Activated B cell treated with CpG ODN at 0.5 μM for 24 hours (primary cell): ENCODE measurements at regions of chr4 and their contacts with region 1.

Region 1: DNA sequence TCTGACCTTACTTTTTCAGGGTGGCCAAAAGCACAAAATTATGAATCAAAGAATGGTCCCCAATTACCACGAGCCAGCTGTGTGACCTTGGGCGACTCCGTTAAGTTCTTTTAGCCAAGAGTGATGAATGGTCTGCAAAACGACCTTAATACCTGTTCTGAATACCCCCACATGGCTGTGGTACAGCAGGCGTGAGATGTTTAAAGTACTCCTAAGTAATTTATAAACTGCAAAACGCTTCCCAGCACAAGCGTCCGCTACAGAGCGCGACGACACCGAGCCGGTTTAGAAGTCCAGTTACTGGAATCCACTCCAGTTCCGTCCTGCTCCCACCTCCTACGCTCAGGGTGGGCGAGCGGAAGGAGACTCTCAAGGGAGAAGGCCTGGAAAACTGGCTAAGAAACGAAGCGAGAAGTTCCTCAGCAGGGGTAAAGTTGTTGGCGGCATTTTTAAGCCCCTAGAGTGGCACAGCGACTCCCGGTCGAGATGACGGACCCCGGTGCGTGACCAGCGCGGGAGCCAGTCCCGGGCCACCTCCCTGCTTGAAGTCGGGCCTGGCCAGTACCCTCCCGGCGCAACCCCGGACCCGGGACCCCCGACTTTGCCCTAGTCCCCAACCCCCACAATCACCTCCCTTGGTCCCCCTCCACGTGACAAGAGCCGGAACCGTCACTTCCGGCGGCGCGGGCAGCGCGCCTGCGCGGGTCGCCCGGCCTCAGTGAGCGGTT is 683 bp upstream of the BMP2K start:
- DNase-seq: no peak
- ATAC-seq: peak; percentile 60
- H3K4me3 Mint-ChIP-seq: peak overlapping the region; percentile 97
- H3K27ac Mint-ChIP-seq: peak overlapping the region; percentile 99
- H3K4me1 Mint-ChIP-seq: peaks cover 19% of the 10 kb centered on the region
- H3K27me3 Mint-ChIP-seq: no peaks in the 10 kb centered on the region
- CTCF ChIP-seq: no peak

Region 2: GRCh38 chr4:78197947-78198346 is 577.5 kb before region 1 on chr4:
- CTCF ChIA-PET with region 1: no interaction called
- POLR2A ChIA-PET with region 1: no interaction called
- intact Hi-C with region 1: no loop called
- DNase-seq: no peak
- ATAC-seq: no peak
- H3K4me3 Mint-ChIP-seq: no peak overlapping the region
- H3K27ac Mint-ChIP-seq: no peak overlapping the region
- H3K4me1 Mint-ChIP-seq: no peaks in the 10 kb centered on the region
- H3K27me3 Mint-ChIP-seq: no peaks in the 10 kb centered on the region
- CTCF ChIP-seq: no peak

Region 3: DNA sequence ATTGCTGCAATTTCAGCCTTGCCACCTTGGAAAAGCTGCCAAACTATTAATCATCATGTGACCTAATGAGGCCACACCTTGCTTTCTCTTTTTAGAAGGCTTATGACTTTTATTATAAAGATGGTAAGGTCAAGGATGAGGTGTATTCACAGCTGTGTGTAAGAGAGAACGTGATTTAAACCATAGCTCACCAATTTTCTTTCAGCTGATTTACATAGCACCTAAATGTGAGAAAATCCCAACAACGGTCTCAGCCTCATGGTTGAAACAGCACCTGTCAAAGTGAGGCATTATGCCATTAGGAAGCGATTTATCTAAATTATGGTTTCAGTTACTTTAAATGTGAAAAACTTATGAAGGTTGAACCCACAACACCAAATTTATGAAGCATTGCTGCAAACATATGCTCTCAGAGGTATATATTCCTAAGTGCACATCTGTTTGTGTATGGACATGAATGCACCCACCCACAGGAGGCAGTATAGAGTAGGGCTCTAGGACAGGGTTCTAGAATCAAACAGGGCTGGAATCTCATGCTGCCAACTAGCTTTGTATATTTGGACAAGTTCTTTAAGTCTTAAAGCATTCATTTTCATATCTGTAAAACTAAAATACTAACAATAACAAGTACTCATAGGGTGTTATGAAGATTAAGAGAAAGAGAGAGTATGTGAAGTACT is 183.2 kb before region 1 on chr4:
- CTCF ChIA-PET with region 1: no interaction called
- POLR2A ChIA-PET with region 1: no interaction called
- intact Hi-C with region 1: loop called (anchors 1 kb)
- DNase-seq: no peak
- ATAC-seq: no peak
- H3K4me3 Mint-ChIP-seq: no peak overlapping the region
- H3K27ac Mint-ChIP-seq: no peak overlapping the region
- H3K4me1 Mint-ChIP-seq: peaks cover 22% of the 10 kb centered on the region
- H3K27me3 Mint-ChIP-seq: no peaks in the 10 kb centered on the region
- CTCF ChIP-seq: no peak

Region 4: GRCh38 chr4:78638337-78639172 is 136.9 kb before region 1 on chr4:
- CTCF ChIA-PET with region 1: interaction called, 4 read pairs
- POLR2A ChIA-PET with region 1: interaction called, 41 read pairs
- intact Hi-C with region 1: no loop called
- DNase-seq: no peak
- ATAC-seq: peak; percentile 78
- H3K4me3 Mint-ChIP-seq: peak overlapping the region; percentile 62
- H3K27ac Mint-ChIP-seq: peak overlapping the region; percentile 93
- H3K4me1 Mint-ChIP-seq: peaks cover 71% of the 10 kb centered on the region
- H3K27me3 Mint-ChIP-seq: no peaks in the 10 kb centered on the region
- CTCF ChIP-seq: no peak

Region 5: DNA sequence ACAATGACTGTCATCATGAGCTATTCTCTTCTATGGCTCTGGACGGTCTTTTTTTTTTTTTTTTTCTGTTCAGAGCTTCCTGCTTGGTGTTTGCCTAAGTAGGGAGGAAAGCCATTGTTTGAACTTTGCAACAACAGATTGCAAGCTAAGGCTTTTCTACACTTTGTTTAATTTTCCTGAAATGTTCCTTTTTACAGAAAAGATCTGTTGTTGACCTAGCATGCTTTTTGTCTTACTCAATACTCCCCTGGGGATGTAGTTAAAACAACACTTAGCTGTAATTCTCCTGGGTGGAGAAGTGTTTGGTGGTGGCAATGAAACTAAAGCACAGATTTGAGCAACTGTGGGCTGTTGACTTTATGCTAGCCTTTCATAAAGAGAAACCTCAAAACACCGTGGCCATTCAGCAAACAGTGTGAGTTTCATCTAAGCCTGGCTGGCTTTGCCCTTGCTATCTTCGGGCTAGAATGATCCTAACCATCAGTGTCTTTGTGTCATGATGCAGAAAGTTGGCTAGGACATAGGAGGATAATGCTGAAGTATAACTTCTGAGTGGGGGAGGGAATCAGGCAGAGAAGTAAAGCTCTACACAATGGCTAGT is 113.4 kb before region 1 on chr4:
- CTCF ChIA-PET with region 1: interaction called, 4 read pairs
- POLR2A ChIA-PET with region 1: interaction called, 21 read pairs
- intact Hi-C with region 1: no loop called
- DNase-seq: no peak
- ATAC-seq: peak; percentile 51
- H3K4me3 Mint-ChIP-seq: peak overlapping the region; percentile 57
- H3K27ac Mint-ChIP-seq: peak overlapping the region; percentile 83
- H3K4me1 Mint-ChIP-seq: peaks cover 78% of the 10 kb centered on the region
- H3K27me3 Mint-ChIP-seq: no peaks in the 10 kb centered on the region
- CTCF ChIP-seq: no peak

Region 6: DNA sequence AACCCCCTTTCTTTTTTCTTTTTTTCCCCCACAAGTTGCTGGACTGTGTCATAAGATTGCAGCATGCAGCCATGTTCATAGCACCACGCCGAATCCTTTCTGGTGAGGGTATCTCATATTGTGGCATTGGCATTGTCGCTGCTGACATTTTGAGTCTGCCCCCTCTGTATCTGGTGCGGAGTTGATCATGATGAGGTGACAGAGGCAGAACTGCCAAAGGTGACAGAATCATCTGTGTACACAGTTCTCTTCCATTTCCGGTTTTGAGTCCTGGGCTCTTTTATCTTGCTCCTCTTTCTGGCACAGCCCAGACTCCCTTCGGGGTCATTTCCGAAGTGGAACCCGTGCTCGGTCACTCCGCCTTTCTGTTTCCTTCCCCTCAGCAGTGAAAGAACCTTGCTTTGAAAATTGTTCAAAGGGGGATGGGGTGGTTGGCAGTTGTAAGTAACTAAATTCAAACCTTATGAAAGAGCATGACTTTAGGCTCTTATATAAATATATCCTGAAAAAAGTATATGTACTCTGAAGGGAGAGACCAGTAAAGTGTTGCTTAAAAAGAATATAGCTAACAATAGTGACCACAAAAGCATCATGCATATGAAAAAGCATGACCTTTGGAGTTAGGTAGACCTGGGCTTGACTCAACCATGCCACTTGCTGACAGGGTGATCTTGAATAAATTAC is 54.3 kb before region 1 on chr4:
- CTCF ChIA-PET with region 1: interaction called, 3 read pairs
- POLR2A ChIA-PET with region 1: interaction called, 15 read pairs
- intact Hi-C with region 1: no loop called
- DNase-seq: no peak
- ATAC-seq: peak; percentile 75
- H3K4me3 Mint-ChIP-seq: peak overlapping the region; percentile 78
- H3K27ac Mint-ChIP-seq: peak overlapping the region; percentile 89
- H3K4me1 Mint-ChIP-seq: peaks cover 40% of the 10 kb centered on the region
- H3K27me3 Mint-ChIP-seq: no peaks in the 10 kb centered on the region
- CTCF ChIP-seq: no peak

Region 7: GRCh38 chr4:78809928-78810835 is 34.7 kb after region 1 on chr4:
- CTCF ChIA-PET with region 1: no interaction called
- POLR2A ChIA-PET with region 1: no interaction called
- intact Hi-C with region 1: loop called (anchors 5 kb)
- DNase-seq: no peak
- ATAC-seq: no peak
- H3K4me3 Mint-ChIP-seq: no peak overlapping the region
- H3K27ac Mint-ChIP-seq: peak overlapping the region; percentile 5
- H3K4me1 Mint-ChIP-seq: peaks cover 67% of the 10 kb centered on the region
- H3K27me3 Mint-ChIP-seq: no peaks in the 10 kb centered on the region
- CTCF ChIP-seq: no peak

Region 8: DNA sequence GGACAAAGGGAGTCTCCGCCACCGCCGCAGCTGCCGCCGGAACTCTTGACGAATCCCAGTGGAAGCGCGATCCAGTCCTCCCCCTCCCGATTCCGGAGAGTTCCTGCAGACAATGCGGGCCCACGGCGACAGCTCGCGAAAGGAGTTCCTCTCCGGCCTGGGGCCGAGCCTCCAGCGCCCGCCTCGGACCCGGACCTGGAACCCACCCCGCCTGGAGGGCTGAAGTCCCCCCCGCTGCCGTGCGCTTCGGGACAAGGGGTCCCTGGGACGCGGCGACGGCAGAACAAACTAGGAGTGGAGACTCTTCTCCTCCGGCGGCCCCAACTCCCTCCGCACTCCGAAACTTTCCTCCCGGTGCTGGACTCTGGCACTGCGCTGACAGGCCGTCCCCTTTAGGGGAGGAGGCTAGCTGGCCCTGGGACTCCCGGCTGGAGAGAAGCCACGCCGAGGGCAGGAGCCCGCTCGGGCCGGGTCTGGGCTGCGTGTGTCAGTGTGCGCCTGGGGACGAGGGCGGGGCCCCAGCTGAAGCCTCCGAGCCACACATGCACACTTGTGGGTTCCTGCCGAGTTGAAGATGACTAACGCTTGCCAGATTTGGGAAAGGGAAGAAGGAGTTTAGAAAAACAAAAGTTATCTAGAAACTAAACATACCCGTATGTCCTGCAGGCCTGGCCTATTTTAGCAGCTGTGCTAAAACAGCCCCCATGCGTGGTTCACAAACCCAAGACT is 1297.4 kb after region 1 on chr4 and contains the start of gene ANTXR2:
- CTCF ChIA-PET with region 1: no interaction called
- POLR2A ChIA-PET with region 1: no interaction called
- intact Hi-C with region 1: loop called (anchors 10 kb)
- DNase-seq: peak; percentile 73
- ATAC-seq: peak; percentile 78
- H3K4me3 Mint-ChIP-seq: peak within 1 kb of the TSS; percentile 94
- H3K27ac Mint-ChIP-seq: peak within 1 kb of the TSS; percentile 97
- H3K4me1 Mint-ChIP-seq: peaks cover 56% of the 10 kb centered on the region
- H3K27me3 Mint-ChIP-seq: no peaks in the 10 kb centered on the region
- CTCF ChIP-seq: no peak
- total RNA-seq, gene ANTXR2: 14.2 and 19.6 TPM in 2 replicates

Region 9: GRCh38 chr4:80367737-80368136 is 1592.3 kb after region 1 on chr4:
- CTCF ChIA-PET with region 1: no interaction called
- POLR2A ChIA-PET with region 1: no interaction called
- intact Hi-C with region 1: no loop called
- DNase-seq: no peak
- ATAC-seq: no peak
- H3K4me3 Mint-ChIP-seq: no peak overlapping the region
- H3K27ac Mint-ChIP-seq: no peak overlapping the region
- H3K4me1 Mint-ChIP-seq: peaks cover 4% of the 10 kb centered on the region
- H3K27me3 Mint-ChIP-seq: peaks cover 2% of the 10 kb centered on the region
- CTCF ChIP-seq: no peak